Caco-2 (cell line): ENCODE measurements at regions of chr2 and their contacts with region 1.

Region 1: GRCh38 chr2:113370478-113371091 is 66.9 kb upstream of the ZNG1B start:
- DNase-seq: peak; percentile 84 to 85
- H3K4me3 ChIP-seq: no peak overlapping the region
- H3K4me3 Mint-ChIP-seq: no peak overlapping the region
- H3K27ac Mint-ChIP-seq: no peak overlapping the region
- H3K4me1 ChIP-seq: peaks cover 19% of the 10 kb centered on the region
- H3K4me1 Mint-ChIP-seq: peaks cover 22% of the 10 kb centered on the region
- H3K27me3 ChIP-seq: no peaks in the 10 kb centered on the region
- H3K27me3 Mint-ChIP-seq: no peaks in the 10 kb centered on the region
- CTCF ChIP-seq: peak; percentile 63 to 84

Region 2: GRCh38 chr2:113298176-113298575 is 72.4 kb before region 1 on chr2:
- CTCF ChIA-PET with region 1: no interaction called
- POLR2A ChIA-PET with region 1: no interaction called
- intact Hi-C with region 1: loop called (anchors 1 kb)
- DNase-seq: no peak
- H3K4me3 ChIP-seq: no peak overlapping the region
- H3K4me3 Mint-ChIP-seq: no peak overlapping the region
- H3K27ac Mint-ChIP-seq: no peak overlapping the region
- H3K4me1 ChIP-seq: no peaks in the 10 kb centered on the region
- H3K4me1 Mint-ChIP-seq: no peaks in the 10 kb centered on the region
- H3K27me3 ChIP-seq: no peaks in the 10 kb centered on the region
- H3K27me3 Mint-ChIP-seq: no peaks in the 10 kb centered on the region
- CTCF ChIP-seq: no peak

Region 3: DNA sequence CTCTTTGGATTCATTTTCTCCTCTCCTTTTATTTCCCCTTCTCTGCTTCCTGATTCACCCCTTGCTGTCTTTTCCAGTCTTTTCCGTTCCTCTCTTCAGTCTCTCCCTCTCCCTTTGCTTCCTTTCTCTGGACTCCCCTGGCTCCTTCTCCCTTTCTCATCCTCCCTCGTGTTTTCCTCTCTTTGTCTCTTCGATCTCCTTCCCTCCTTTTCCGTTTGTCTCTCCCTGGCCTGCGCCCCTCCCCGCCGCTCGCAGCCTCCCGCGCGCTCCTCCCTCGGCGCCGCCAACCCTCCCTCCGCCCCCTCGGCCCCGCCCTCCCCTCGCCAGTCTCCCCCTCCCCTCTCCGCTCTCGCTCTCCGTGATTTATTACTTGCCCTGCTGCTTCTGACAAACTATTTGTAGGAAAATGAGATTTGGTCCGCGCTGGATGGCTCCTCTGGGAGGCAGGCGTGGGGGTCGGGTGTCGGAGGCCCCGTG is 45.9 kb before region 1 on chr2:
- CTCF ChIA-PET with region 1: no interaction called
- POLR2A ChIA-PET with region 1: no interaction called
- intact Hi-C with region 1: loop called (anchors 1 kb)
- DNase-seq: peak; percentile 81 to 83
- H3K4me3 ChIP-seq: peak overlapping the region; percentile 60
- H3K4me3 Mint-ChIP-seq: peak overlapping the region; percentile 68
- H3K27ac Mint-ChIP-seq: peak overlapping the region; percentile 33
- H3K4me1 ChIP-seq: peaks cover 19% of the 10 kb centered on the region
- H3K4me1 Mint-ChIP-seq: peaks cover 42% of the 10 kb centered on the region
- H3K27me3 ChIP-seq: no peaks in the 10 kb centered on the region
- H3K27me3 Mint-ChIP-seq: no peaks in the 10 kb centered on the region
- CTCF ChIP-seq: no peak

Region 4: DNA sequence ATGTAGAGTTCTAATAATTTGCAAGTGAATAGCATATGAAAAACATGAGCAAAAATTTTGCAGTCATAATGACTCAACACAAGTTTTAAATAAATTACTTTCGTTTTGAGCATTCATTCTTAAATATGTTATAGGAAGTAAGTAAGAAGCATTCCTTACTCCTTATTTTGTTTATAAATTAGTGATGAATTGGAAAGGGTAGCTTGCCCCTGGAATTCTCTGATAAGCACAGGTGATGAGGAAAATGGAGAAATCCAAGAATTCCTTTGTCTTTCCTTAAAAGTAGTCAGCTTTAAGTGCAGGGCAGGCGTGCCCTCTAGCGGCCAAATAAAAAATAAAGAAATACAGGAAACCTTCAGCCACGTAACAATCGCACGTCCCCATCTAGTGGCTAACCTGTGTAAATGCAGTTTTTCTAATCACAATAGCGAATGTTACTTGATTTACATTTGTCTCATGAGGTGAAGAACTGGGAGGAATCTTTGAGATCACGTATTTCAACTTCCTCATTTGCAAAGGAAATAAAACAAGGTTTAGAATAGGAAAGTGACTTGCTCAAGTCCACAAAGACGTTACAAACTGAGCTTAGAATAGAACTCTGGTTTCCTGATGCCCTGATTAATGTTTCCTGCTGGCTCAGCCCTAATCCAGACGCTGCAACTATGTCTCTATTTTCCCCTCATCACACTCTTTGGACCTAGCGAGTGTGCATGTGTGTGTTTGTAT is 19.7 kb after region 1 on chr2:
- CTCF ChIA-PET with region 1: no interaction called
- POLR2A ChIA-PET with region 1: no interaction called
- intact Hi-C with region 1: loop called (anchors 2 kb)
- DNase-seq: peak; percentile 76 to 84
- H3K4me3 ChIP-seq: no peak overlapping the region
- H3K4me3 Mint-ChIP-seq: no peak overlapping the region
- H3K27ac Mint-ChIP-seq: no peak overlapping the region
- H3K4me1 ChIP-seq: no peaks in the 10 kb centered on the region
- H3K4me1 Mint-ChIP-seq: no peaks in the 10 kb centered on the region
- H3K27me3 ChIP-seq: no peaks in the 10 kb centered on the region
- H3K27me3 Mint-ChIP-seq: no peaks in the 10 kb centered on the region
- CTCF ChIP-seq: peak; percentile 85 to 95

Region 5: GRCh38 chr2:114156366-114157056 is 785.9 kb after region 1 on chr2:
- CTCF ChIA-PET with region 1: no interaction called
- POLR2A ChIA-PET with region 1: no interaction called
- intact Hi-C with region 1: no loop called
- DNase-seq: no peak
- H3K4me3 ChIP-seq: no peak overlapping the region
- H3K4me3 Mint-ChIP-seq: no peak overlapping the region
- H3K27ac Mint-ChIP-seq: no peak overlapping the region
- H3K4me1 ChIP-seq: no peaks in the 10 kb centered on the region; the same call in 1 of the 2 replicates
- H3K4me1 Mint-ChIP-seq: peaks cover 18% of the 10 kb centered on the region
- H3K27me3 ChIP-seq: no peaks in the 10 kb centered on the region
- H3K27me3 Mint-ChIP-seq: no peaks in the 10 kb centered on the region
- CTCF ChIP-seq: no peak